Activated naive CD4-positive, alpha-beta T cell treated with anti-CD3 and anti-CD28 coated beads for 36 hours (primary cell): ENCODE measurements at regions of chrX and their contacts with region 1.

Region 1: GRCh38 chrX:48475774-48476577 is at the start of gene FTSJ1:
- DNase-seq: peak; percentile 86
- H3K4me3 Mint-ChIP-seq: peak within 1 kb of the TSS; percentile 76
- H3K27ac Mint-ChIP-seq: peak within 1 kb of the TSS; percentile 90
- H3K4me1 Mint-ChIP-seq: peaks cover 32% of the 10 kb centered on the region
- H3K27me3 Mint-ChIP-seq: no peaks in the 10 kb centered on the region
- total RNA-seq, gene FTSJ1: 66.2 to 66.8 TPM

Region 2: DNA sequence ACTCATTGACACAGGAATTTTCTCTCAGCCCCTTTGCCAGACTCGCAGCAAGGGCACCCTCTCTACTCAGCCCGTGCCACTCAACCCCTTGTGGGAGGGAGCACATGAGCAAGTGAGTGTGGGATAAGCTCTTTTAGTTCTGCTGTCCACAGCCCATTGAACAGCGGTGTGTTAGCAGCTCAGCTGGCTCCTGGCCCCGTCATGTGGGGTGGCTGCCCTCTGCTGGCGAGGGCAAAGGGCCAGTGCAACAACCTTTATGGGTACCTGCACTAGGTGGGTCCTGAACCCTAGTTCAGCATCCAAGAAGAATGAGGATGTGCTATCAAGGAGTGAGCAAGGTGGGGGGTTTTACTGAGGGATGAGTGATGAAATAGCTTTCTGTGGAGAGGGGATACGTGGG is 724.3 kb before region 1 on chrX:
- CTCF ChIA-PET with region 1: no interaction called
- intact Hi-C with region 1: no loop called
- DNase-seq: peak; percentile 45
- H3K4me3 Mint-ChIP-seq: no peak overlapping the region
- H3K27ac Mint-ChIP-seq: no peak overlapping the region
- H3K4me1 Mint-ChIP-seq: no peaks in the 10 kb centered on the region
- H3K27me3 Mint-ChIP-seq: no peaks in the 10 kb centered on the region

Region 3: DNA sequence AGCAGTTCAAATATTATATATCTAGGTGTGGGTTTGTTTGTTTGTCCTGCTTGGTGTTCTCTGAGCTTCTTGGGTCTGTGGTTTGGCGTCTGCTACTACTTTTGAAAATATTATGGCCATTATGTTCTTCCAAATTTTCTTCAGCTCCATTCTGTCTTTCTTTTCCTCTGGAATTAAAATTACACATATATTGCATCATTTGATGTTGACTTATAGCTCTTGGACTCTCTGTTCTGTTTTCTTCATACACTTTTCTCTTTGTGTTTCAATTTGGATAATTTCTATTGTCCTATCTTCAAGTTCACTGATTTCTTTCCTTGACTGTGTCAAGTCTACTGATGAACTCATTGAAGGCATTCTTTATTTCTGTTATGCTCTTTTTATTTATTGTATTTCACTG is 704.5 kb before region 1 on chrX:
- CTCF ChIA-PET with region 1: no interaction called
- intact Hi-C with region 1: no loop called
- DNase-seq: no peak
- H3K4me3 Mint-ChIP-seq: no peak overlapping the region
- H3K27ac Mint-ChIP-seq: no peak overlapping the region
- H3K4me1 Mint-ChIP-seq: no peaks in the 10 kb centered on the region
- H3K27me3 Mint-ChIP-seq: peaks cover 3% of the 10 kb centered on the region

Region 4: GRCh38 chrX:48521353-48522243 is 45.6 kb after region 1 on chrX and contains the start of gene EBP:
- CTCF ChIA-PET with region 1: interaction called, 3 read pairs
- intact Hi-C with region 1: loop called (anchors 1 kb)
- DNase-seq: peak; percentile 98
- H3K4me3 Mint-ChIP-seq: peak within 1 kb of the TSS; percentile 90
- H3K27ac Mint-ChIP-seq: peak within 1 kb of the TSS; percentile 98
- H3K4me1 Mint-ChIP-seq: peaks cover 25% of the 10 kb centered on the region
- H3K27me3 Mint-ChIP-seq: no peaks in the 10 kb centered on the region
- total RNA-seq, gene EBP: 118 to 123 TPM

Region 5: GRCh38 chrX:48539345-48540027 is 63.5 kb after region 1 on chrX and contains the start of gene TBC1D25:
- CTCF ChIA-PET with region 1: interaction called, 5 read pairs
- intact Hi-C with region 1: loop called (anchors 1 kb)
- DNase-seq: peak; percentile 98
- H3K4me3 Mint-ChIP-seq: peak within 1 kb of the TSS; percentile 88
- H3K27ac Mint-ChIP-seq: peak within 1 kb of the TSS; percentile 93
- H3K4me1 Mint-ChIP-seq: peaks cover 12% of the 10 kb centered on the region
- H3K27me3 Mint-ChIP-seq: no peaks in the 10 kb centered on the region
- total RNA-seq, gene TBC1D25: 10.6 to 11.1 TPM